ENCODE measurements at regions of chr2 and their contacts with region 1.

Region 1: GRCh38 chr2:66434679-66435548 is at the start of gene MEIS1:
- ATAC-seq: peak; percentile 62 to 76 (median 72)
- H3K4me3 ChIP-seq: peak within 1 kb of the TSS; percentile 57 to 66 (median 61)
- H3K27ac ChIP-seq: peak within 1 kb of the TSS; percentile 93 to 96
- H3K4me1 ChIP-seq: peaks cover 11% of the 10 kb centered on the region in 2 donors
- total RNA-seq, gene MEIS1: 11.7 to 241 (median 152) TPM

Region 2: GRCh38 chr2:64807417-64807816 is 1627.5 kb before region 1 on chr2:
- in situ Hi-C with region 1: no loop called
- ATAC-seq: peak; percentile 55 to 99 (median 90)
- H3K4me3 ChIP-seq: no peak overlapping the region
- H3K27ac ChIP-seq: no peak overlapping the region
- H3K4me1 ChIP-seq: no peaks in the 10 kb centered on the region

Region 3: DNA sequence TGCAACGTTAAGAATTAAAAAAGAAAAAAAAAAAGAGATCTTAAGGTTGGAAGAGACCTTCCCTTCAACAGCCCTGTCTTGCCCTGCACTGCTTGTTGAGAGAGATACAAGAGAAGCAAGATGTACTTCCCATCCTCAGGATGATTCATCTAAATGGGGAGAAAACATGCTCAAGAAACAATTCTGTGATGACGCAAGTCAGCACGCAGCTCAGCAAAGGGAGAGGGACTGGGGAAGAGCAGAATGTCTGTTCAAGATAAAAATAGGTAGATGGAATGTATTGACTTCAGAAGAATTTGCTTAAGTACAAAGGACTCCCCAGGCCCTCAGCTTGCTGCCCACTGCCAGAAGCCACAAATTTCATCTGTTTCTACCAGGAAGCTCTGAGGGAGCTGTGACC is 804.3 kb before region 1 on chr2:
- in situ Hi-C with region 1: loop called in 1 of 9 experiments (anchors 25 kb)
- ATAC-seq: peak in 2 of 8 experiments; percentile 77 to 88
- H3K4me3 ChIP-seq: no peak overlapping the region
- H3K27ac ChIP-seq: no peak overlapping the region
- H3K4me1 ChIP-seq: no peaks in the 10 kb centered on the region

Region 4: GRCh38 chr2:66334237-66335054 is 100.5 kb before region 1 on chr2:
- in situ Hi-C with region 1: no loop called
- ATAC-seq: peak in 2 of 8 experiments; percentile 24 to 36
- H3K4me3 ChIP-seq: no peak overlapping the region
- H3K27ac ChIP-seq: no peak overlapping the region
- H3K4me1 ChIP-seq: no peaks in the 10 kb centered on the region

Region 5: DNA sequence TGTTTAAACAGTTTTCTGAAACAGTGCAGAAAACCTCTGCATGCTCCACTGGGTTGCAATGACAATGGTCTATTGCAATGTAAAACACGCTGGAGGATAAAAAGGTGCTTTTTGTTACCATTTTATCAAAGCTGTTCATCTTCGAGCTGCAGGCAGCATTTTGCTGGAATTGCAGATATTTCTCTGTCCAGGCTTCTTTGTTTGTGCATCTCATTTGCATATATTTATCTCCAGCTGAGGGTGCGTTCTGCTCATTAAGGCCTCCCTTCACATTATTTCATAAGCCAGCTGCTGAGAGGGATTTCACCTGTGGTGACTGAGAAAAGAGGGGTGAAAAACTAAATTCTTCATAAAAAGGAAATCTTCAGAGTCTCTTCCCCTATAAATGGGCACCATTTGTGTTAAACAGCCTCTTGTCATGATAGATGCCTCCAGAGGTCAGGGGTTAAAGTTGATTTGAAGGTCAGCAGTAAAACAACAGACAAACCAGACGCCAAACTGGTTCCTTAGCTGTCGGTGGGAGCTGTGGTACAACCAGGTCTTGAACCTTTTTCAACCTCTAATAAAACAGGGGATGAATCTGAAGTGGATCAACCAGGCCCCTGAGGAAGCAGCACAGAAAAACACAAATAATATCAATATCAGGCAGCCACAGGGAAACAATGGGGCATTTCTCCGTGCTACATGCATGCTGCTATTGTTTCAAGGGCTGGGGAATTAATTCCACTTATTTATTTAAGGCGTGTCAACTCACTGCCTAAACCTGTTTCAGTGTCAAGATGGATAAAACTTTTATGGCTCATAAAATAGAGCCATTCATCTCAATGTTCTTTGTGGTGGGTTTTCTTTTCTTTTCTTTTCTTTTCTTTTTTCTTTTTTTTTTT is 265.1 kb after region 1 on chr2:
- in situ Hi-C with region 1: loop called in 2 of 9 experiments (anchors 25 kb)
- ATAC-seq: peak in 5 of 8 experiments; percentile 52 to 78 (median 64)
- H3K4me3 ChIP-seq: peak overlapping the region; percentile 0 to 25 (median 17)
- H3K27ac ChIP-seq: peak overlapping the region; percentile 80 to 82
- H3K4me1 ChIP-seq: peaks cover 83 to 92% of the 10 kb centered on the region in 2 donors

Region 6: DNA sequence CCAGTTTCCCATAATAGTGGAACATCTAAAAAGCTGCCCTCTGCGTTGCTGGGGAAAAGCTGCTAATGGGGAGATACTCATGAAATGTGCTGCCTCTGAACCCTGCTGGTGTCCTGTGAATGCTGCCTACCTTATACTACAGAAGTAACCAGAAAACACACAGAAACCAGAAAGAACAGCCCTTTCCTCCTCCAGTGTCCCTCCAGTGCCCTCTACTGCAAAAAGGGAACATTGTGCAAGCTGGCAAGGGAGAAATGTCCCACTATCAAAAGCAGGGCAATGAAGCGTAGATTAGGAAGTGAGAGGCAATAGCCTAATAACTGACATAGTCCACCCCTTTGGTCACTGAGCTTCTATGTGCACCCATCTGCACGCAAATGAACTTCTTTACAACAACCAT is 799.5 kb after region 1 on chr2:
- in situ Hi-C with region 1: loop called in 1 of 9 experiments (anchors 25 kb)
- ATAC-seq: peak in 6 of 8 experiments; percentile 44 to 77 (median 68)
- H3K4me3 ChIP-seq: no peak overlapping the region
- H3K27ac ChIP-seq: no peak overlapping the region
- H3K4me1 ChIP-seq: peaks cover 0 to 9% of the 10 kb centered on the region in 2 donors

Region 7: GRCh38 chr2:67649331-67650261 is 1214.7 kb after region 1 on chr2:
- in situ Hi-C with region 1: loop called in 2 of 9 experiments (anchors 25 kb)
- ATAC-seq: peak; percentile 11 to 69 (median 30)
- H3K4me3 ChIP-seq: no peak overlapping the region
- H3K27ac ChIP-seq: peak overlapping the region; percentile 32 to 40
- H3K4me1 ChIP-seq: peaks cover 21 to 28% of the 10 kb centered on the region in 2 donors

Region 8: GRCh38 chr2:68031542-68032160 is 1596.7 kb after region 1 on chr2:
- in situ Hi-C with region 1: loop called in 1 of 9 experiments (anchors 25 kb)
- ATAC-seq: peak in 6 of 8 experiments; percentile 38 to 64 (median 49)
- H3K4me3 ChIP-seq: no peak overlapping the region
- H3K27ac ChIP-seq: no peak overlapping the region
- H3K4me1 ChIP-seq: peaks cover 0 to 6% of the 10 kb centered on the region in 2 donors